Endothelial cell of umbilical vein (primary cell): ENCODE measurements at regions of chr9 and their contacts with region 1.

Region 1: GRCh38 chr9:27261517-27262211 is 35.3 kb downstream of the EQTN start:
- DNase-seq: no peak
- H3K4me3 ChIP-seq: no peak overlapping the region
- H3K27ac ChIP-seq: no peak overlapping the region
- H3K4me1 ChIP-seq: no peaks in the 10 kb centered on the region
- H3K27me3 ChIP-seq: peaks cover 7 to 11% of the 10 kb centered on the region in 2 experiments
- CTCF ChIP-seq: no peak
- POLR2A ChIP-seq: no peak

Region 2: GRCh38 chr9:27247756-27248155 is 13.9 kb before region 1 on chr9:
- CTCF ChIA-PET with region 1: interaction called, 12 read pairs
- POLR2A ChIA-PET with region 1: no interaction called
- dilution Hi-C with region 1: no loop called
- intact Hi-C with region 1: no loop called
- DNase-seq: peak; percentile 47
- H3K4me3 ChIP-seq: no peak overlapping the region
- H3K27ac ChIP-seq: no peak overlapping the region
- H3K4me1 ChIP-seq: no peaks in the 10 kb centered on the region
- H3K27me3 ChIP-seq: peaks cover 0 to 2% of the 10 kb centered on the region in 2 experiments
- CTCF ChIP-seq: peak; percentile 51 to 62
- POLR2A ChIP-seq: no peak

Region 3: GRCh38 chr9:27353474-27354229 is 92.0 kb after region 1 on chr9:
- CTCF ChIA-PET with region 1: no interaction called
- POLR2A ChIA-PET with region 1: no interaction called
- dilution Hi-C with region 1: no loop called
- intact Hi-C with region 1: no loop called
- DNase-seq: no peak
- H3K4me3 ChIP-seq: no peak overlapping the region
- H3K27ac ChIP-seq: no peak overlapping the region
- H3K4me1 ChIP-seq: no peaks in the 10 kb centered on the region
- H3K27me3 ChIP-seq: no peaks in the 10 kb centered on the region
- CTCF ChIP-seq: no peak
- POLR2A ChIP-seq: no peak